Dorsolateral prefrontal cortex (tissue), 120 donors: ENCODE measurements at regions of chr19 and their contacts with region 1.

Region 1: GRCh38 chr19:54390942-54391577 is 24.2 kb upstream of the TTYH1 start:
- DNase-seq: peak in 4 of 10 donors; percentile 23 to 44 (median 29)
- H3K4me3 ChIP-seq: no peak overlapping the region
- H3K27ac ChIP-seq: no peak overlapping the region
- H3K27me3 ChIP-seq: peaks cover 0 to 38% (median 5%) of the 10 kb centered on the region in 45 donors
- CTCF ChIP-seq: peak; percentile 23 to 82 (median 73)

Region 2: GRCh38 chr19:54357381-54357780 is 33.7 kb before region 1 on chr19:
- intact Hi-C with region 1: no loop called
- DNase-seq: no peak
- H3K4me3 ChIP-seq: no peak overlapping the region
- H3K27ac ChIP-seq: no peak overlapping the region
- H3K27me3 ChIP-seq: peaks cover 0 to 10% (median 0%) of the 10 kb centered on the region in 45 donors
- CTCF ChIP-seq: no peak

Region 3: GRCh38 chr19:54415901-54416673 is 25.0 kb after region 1 on chr19:
- intact Hi-C with region 1: loop called in 1 of 2 experiments (anchors 2 kb)
- DNase-seq: no peak
- H3K4me3 ChIP-seq: peak overlapping the region; percentile 53 to 96 (median 84)
- H3K27ac ChIP-seq: peak overlapping the region; percentile 85 to 100 (median 99)
- H3K27me3 ChIP-seq: peaks cover 0 to 27% (median 0%) of the 10 kb centered on the region in 45 donors
- CTCF ChIP-seq: no peak

Region 4: DNA sequence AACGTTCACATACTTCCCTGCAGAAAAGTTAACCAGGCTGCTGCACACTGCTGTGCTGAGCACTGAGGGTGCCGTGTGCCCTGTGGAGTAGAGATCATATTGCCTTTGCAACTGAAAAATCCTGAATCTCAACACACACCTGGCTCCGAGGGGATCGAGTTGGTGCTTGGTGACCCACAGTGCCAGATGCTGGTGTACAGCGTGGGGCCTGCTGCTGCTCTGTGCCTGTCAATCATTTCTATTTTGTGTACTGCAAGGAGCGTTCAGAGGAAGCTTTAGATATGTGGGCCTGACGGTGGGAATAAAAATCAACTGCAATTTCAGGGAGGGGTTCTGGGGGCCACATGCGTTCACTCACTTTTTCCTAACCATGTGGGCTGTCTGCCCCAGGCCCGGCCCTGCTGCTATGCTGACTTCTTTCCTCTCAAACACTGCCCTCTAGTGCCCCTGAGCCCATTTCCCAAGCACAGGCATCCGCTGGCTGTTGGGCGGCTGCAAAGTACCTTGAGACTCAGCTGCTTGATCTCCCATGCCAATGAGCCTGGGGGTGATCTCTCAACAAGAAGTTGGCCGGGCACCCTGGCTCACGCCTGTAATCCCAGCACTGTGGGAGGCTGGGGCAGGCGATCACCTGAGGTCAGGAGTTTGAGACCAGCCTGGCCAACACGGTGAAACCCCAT is 48.3 kb after region 1 on chr19:
- intact Hi-C with region 1: loop called in 1 of 2 experiments (anchors 2 kb)
- DNase-seq: peak in 8 of 10 donors; percentile 62 to 82 (median 78)
- H3K4me3 ChIP-seq: peak overlapping the region in 3 of 59 donors; percentile 0 to 8 (median 4)
- H3K27ac ChIP-seq: peak overlapping the region in 54 of 59 donors; percentile 0 to 92 (median 73)
- H3K27me3 ChIP-seq: no peaks in the 10 kb centered on the region
- CTCF ChIP-seq: peak in 55 of 56 donors; percentile 38 to 89 (median 71)

Region 5: GRCh38 chr19:54576411-54576976 is 185.4 kb after region 1 on chr19:
- intact Hi-C with region 1: no loop called
- DNase-seq: no peak
- H3K4me3 ChIP-seq: no peak overlapping the region
- H3K27ac ChIP-seq: no peak overlapping the region
- H3K27me3 ChIP-seq: peaks cover 0 to 38% (median 10%) of the 10 kb centered on the region in 45 donors
- CTCF ChIP-seq: no peak